ENCODE measurements at regions of chr9 and their contacts with region 1.

Region 1: DNA sequence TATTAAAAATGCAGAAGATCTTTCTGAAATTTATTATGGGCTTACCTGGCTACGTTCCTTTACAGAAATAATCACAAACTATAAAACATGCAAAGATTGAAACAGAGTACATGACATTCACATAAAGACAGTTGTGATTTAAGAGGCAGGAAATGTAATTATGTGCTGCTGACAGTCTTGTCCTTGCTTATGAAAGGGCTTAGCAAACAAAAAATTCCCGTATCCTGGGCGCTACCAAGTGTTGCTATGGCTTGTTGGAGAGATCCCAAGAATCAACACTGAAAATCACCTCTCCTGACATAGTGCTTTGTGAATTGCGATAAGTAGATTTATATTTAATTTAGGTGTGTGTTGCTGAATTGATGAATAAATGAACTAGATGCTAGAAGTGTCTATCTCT is 352.5 kb upstream of the C9orf72 start:
- DNase-seq: no peak
- ATAC-seq: no peak
- H3K4me3 ChIP-seq: no peak overlapping the region
- H3K27ac ChIP-seq: no peak overlapping the region
- H3K4me1 ChIP-seq: no peaks in the 10 kb centered on the region
- H3K27me3 ChIP-seq: no peaks in the 10 kb centered on the region

Region 2: DNA sequence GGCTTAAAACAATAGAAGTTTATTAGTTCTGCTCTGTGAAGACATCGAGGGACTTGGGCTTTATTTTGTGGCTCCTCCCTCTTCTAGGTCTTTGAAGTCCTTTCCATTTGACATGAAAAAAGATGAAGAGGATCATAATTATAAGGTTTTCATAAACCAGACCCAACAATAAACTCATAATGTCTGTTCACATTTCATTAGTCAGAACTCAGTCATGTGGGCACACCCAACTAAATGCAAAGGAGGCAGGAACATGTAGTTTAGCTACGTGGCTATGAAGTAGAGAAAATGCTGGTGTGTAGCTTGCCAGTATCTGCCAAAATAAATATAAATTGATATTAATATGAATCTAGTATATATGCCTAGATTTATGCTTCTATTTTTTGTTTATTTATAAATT is 41.4 kb after region 1 on chr9:
- intact Hi-C with region 1: loop called in 1 of 2 experiments (anchors 5 kb)
- DNase-seq: no peak
- ATAC-seq: no peak
- H3K4me3 ChIP-seq: no peak overlapping the region
- H3K27ac ChIP-seq: no peak overlapping the region
- H3K4me1 ChIP-seq: no peaks in the 10 kb centered on the region
- H3K27me3 ChIP-seq: no peaks in the 10 kb centered on the region

Measured in aorta (tissue), 5 donors.